ENCODE measurements at regions of chr6 and their contacts with region 1.

Region 1: GRCh38 chr6:44237813-44238433 is 9.0 kb upstream of the HSP90AB1 start:
- DNase-seq: no peak
- H3K4me3 ChIP-seq: peak overlapping the region; percentile 53
- H3K27me3 ChIP-seq: no peaks in the 10 kb centered on the region
- CTCF ChIP-seq: peak; percentile 88

Region 2: DNA sequence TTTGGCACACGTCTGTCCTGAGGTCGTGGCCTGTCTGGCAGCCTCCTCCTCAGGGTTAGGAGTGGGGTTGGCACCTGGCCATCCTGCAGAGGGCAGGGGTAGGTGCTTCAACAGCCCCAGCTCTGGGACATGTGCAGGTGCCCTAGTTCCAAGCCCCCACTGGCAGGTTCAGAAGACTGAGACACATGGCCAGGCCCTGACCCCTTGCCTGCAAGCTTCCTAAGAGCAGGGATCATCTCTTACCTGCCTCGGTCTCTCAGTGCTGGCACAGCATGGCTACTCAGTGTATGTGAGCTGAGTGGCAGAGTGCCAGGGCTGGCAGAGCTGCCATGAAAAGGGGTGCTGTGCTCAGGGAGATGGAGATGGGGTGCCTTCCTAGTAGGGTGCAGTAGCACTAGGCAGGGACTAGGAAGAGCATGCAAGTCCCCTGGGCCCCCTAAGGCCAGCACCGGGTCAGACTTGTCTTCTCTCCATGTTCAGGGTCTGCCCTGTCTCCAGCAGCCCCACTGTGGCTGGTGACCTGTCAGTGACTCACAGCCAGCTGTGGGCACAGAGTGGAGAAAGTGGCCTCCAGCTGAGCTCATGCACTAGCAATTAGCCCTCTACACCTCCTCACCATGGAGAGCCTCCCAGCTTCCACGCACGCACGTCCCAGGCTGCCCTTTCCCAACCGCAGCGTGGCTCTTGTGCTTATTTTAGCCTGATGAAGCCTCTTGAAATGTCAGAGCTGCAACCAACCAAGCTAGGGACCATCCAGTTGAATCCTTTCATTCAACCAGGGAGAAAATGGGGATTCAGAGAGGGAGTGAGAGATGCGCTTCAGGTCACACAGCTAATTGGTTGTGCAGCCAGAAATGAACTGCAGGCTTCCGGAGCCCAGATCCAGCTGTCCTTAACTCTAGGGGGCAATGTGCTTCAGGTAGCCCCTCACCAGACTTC is 227.2 kb before region 1 on chr6:
- CTCF ChIA-PET with region 1: no interaction called
- POLR2A ChIA-PET with region 1: no interaction called
- DNase-seq: peak; percentile 78
- H3K4me3 ChIP-seq: no peak overlapping the region
- H3K27me3 ChIP-seq: no peaks in the 10 kb centered on the region
- CTCF ChIP-seq: no peak

Region 3: DNA sequence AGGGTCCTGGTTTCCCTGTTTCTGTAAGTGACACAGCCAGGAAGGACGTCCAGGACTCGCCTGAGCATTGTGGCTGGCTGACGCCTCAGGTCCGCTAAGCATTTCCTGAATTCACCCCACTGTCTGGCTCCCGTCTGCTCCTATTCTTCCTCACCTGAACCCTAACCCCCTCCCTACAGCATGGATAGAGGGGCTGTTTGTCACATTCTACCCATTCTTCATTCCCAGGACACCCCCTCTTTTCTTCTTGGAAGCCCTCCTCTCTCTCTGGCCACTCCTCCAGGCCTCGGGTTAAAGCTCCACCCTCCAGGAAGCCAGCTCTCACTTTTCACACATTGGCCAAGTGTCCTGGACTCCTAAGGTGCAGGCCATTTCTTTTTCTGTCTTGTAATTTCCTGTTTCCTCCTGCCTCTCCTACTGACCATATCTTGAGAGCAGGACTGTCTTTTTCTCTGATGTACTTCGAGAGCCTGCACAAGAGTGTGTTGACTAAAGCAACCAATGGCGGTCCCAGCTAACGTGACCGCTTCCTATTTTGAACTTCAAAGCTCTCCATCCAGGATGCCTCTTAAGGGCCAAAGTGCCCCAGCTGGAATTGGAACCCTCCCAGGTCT is 45.4 kb before region 1 on chr6:
- CTCF ChIA-PET with region 1: interaction called, 5 read pairs
- POLR2A ChIA-PET with region 1: interaction called, 14 read pairs
- DNase-seq: no peak
- H3K4me3 ChIP-seq: 0 out of 2 replicates have a peak overlapping the region, but pooled peaks have one; percentile 6
- H3K27me3 ChIP-seq: peaks cover 3% of the 10 kb centered on the region
- CTCF ChIP-seq: no peak

Region 4: DNA sequence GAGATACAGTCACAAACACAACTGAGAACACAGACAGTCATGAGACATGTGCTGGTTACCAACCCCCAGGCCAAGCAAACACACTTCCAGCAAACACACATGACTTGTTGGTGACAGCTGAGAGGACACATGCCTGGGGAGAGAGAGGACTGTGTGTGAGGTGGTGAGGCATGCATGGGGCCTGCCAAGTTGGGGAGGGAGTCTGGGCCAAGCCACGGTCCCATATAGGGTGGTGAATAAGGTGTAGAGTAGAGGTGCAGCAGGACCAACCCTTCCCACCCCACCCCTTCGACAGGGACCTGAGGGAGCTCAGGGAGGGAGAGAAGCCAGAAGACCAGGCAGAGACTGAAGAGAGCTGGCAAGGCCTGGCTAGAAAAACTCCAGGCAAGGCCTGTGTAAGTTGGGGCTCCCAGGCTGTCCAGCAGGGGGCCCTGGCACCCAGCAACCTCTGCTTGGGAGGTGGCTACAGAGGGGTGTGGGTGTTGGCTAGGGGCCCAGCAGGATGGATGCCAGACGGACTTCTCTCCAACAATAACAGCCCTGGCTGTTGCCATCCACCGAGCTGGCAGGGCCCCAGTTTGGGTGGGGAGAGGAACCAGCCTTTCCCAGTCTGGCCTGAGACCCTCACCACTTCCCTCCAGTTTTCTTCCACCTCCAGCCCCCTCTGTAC is 16.5 kb before region 1 on chr6:
- CTCF ChIA-PET with region 1: interaction called, 89 read pairs
- POLR2A ChIA-PET with region 1: interaction called, 19 read pairs
- DNase-seq: no peak
- H3K4me3 ChIP-seq: no peak overlapping the region
- H3K27me3 ChIP-seq: peaks cover 1% of the 10 kb centered on the region; the same call in 1 of the 2 replicates
- CTCF ChIP-seq: peak; percentile 91

Region 5: GRCh38 chr6:44257025-44257752 is 19.3 kb after region 1 on chr6 and contains the start of gene SLC35B2:
- CTCF ChIA-PET with region 1: interaction called, 20 read pairs
- POLR2A ChIA-PET with region 1: no interaction called
- DNase-seq: no peak
- H3K4me3 ChIP-seq: peak within 1 kb of the TSS; percentile 81
- H3K27me3 ChIP-seq: no peaks in the 10 kb centered on the region
- CTCF ChIP-seq: peak; percentile 41
- polyA plus RNA-seq, gene SLC35B2: 104 and 145 TPM in 2 replicates

Measured in BJ (cell line).